ENCODE measurements at regions of chr15 and their contacts with region 1.

Region 1: DNA sequence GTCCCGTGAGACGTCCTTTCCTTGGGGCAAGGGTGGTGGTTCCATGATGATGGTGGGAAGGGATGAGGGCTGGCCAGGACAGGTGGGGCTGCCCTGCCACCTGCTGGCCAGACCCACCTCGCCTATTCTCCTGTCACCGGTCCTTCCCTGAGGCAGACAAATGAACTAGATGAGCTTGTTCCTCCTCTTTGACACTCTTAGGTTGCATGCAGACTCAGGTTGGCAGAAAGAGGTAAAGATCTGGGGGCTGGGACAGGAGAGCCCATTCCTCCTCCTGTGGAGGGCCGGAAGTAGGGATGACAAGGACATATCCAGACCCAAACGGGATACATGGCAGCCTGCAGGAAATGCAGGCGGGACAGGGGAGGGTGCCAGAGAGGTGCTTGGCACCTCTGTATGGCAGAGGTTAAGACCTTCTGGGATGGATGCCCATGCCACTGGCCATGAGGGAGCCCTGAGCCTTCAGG is 38.6 kb downstream of the ACSBG1 start:
- DNase-seq: peak; percentile 63
- H3K4me3 Mint-ChIP-seq: no peak overlapping the region
- H3K27ac Mint-ChIP-seq: no peak overlapping the region
- H3K4me1 Mint-ChIP-seq: no peaks in the 10 kb centered on the region
- H3K27me3 Mint-ChIP-seq: no peaks in the 10 kb centered on the region

Region 2: GRCh38 chr15:77944002-77944867 is 251.5 kb before region 1 on chr15:
- CTCF ChIA-PET with region 1: no interaction called
- intact Hi-C with region 1: no loop called
- DNase-seq: peak; percentile 82
- H3K4me3 Mint-ChIP-seq: peak overlapping the region; percentile 69
- H3K27ac Mint-ChIP-seq: peak overlapping the region; percentile 59
- H3K4me1 Mint-ChIP-seq: peaks cover 9% of the 10 kb centered on the region
- H3K27me3 Mint-ChIP-seq: no peaks in the 10 kb centered on the region

Region 3: DNA sequence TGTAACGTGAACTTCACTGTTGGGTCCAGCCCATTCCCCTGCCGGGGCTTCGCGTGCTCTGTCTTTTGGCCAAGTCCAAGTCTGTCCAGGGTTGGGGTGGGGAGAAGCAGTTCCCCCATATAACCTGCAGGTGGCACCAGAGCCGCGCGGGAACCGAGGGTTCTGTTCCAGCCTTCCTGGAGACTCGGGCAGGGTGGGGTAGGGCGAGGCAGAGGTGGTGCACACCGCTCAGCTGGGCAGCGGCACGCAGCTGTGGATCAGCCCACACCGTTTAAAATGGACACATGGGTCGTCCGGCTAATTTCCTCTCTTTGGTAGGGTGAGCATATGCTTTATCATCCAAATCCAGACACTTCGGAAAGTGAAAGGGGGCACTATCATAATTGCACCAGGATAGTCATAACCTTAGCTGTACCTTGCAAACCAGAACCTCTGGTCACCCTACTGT is 236.3 kb before region 1 on chr15:
- CTCF ChIA-PET with region 1: interaction called, 15 read pairs
- intact Hi-C with region 1: loop called (anchors 1 kb)
- DNase-seq: peak; percentile 85
- H3K4me3 Mint-ChIP-seq: peak overlapping the region; percentile 17
- H3K27ac Mint-ChIP-seq: no peak overlapping the region
- H3K4me1 Mint-ChIP-seq: peaks cover under 1% of the 10 kb centered on the region
- H3K27me3 Mint-ChIP-seq: peaks cover 3% of the 10 kb centered on the region

Region 4: GRCh38 chr15:78120523-78120922 is 75.2 kb before region 1 on chr15:
- CTCF ChIA-PET with region 1: interaction called, 80 read pairs
- intact Hi-C with region 1: no loop called
- DNase-seq: no peak
- H3K4me3 Mint-ChIP-seq: no peak overlapping the region
- H3K27ac Mint-ChIP-seq: no peak overlapping the region
- H3K4me1 Mint-ChIP-seq: no peaks in the 10 kb centered on the region
- H3K27me3 Mint-ChIP-seq: no peaks in the 10 kb centered on the region

Region 5: DNA sequence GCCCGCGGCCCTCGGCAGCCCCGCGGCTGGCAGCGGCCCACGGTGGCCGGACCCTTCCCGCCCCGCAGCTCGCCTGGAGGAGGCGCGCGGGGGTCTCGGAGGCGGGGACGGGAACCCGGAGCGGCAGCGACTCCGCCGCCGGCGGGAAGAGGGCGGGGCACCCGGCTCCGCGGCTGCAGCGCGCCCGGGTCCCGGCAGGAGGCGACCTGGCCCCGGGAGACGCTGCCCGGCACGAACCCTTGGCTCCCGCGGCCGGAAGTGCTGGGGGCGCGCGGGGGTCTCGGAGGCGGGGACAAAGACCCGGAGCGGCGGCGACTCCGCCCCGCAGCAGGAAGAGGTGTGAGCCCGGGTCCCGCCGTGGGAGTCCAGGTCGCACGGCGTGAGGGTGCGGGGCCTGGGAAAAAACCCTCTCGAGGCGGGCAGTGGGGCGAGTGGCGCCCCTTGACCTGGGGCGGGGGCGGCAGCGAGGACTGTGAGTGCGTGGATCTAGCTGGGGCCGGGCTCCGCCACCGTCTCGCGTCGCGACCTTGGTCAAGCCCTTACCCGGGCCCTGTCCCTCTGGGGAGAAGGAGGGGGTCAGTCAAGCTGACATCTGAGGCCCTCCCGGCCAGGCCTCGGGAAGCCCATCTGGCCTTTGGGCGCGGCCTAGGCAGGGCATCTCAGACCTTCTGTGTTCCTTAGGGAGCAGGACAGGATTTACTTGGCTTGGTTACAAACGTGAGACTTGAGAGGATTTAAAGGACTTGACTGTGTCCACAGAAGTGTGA is 64.3 kb before region 1 on chr15 and contains the start of gene CIB2:
- CTCF ChIA-PET with region 1: interaction called, 59 read pairs
- intact Hi-C with region 1: loop called (anchors 1 kb)
- DNase-seq: peak; percentile 73
- H3K4me3 Mint-ChIP-seq: peak within 1 kb of the TSS; percentile 81
- H3K27ac Mint-ChIP-seq: peak within 1 kb of the TSS; percentile 47
- H3K4me1 Mint-ChIP-seq: peaks cover 17% of the 10 kb centered on the region
- H3K27me3 Mint-ChIP-seq: no peaks in the 10 kb centered on the region
- total RNA-seq, gene CIB2: 1.9 to 2.1 TPM

Region 6: DNA sequence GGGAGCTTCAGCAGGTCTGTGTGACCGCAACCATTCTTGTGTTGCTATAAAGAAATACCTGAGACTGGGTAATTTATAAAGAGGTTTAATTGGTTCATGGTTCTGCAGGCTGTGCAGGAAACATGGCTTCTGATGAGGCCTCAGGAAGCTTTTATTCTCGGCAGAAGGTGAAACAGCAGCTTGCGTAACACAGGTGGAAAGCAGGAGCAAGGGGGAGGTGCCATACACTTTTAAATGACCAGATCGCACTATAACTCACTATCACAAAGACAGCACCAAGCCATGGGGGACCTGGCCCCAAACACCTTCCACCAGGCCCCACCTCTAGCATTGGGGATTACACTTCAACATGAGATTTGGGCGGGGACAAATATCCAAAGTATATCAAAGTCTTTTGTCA is 56.2 kb before region 1 on chr15:
- CTCF ChIA-PET with region 1: interaction called, 13 read pairs
- intact Hi-C with region 1: no loop called
- DNase-seq: no peak
- H3K4me3 Mint-ChIP-seq: no peak overlapping the region
- H3K27ac Mint-ChIP-seq: no peak overlapping the region
- H3K4me1 Mint-ChIP-seq: no peaks in the 10 kb centered on the region
- H3K27me3 Mint-ChIP-seq: no peaks in the 10 kb centered on the region

Region 7: GRCh38 chr15:78170848-78171773 is 24.7 kb before region 1 on chr15:
- CTCF ChIA-PET with region 1: interaction called, 12 read pairs
- intact Hi-C with region 1: no loop called
- DNase-seq: no peak
- H3K4me3 Mint-ChIP-seq: no peak overlapping the region
- H3K27ac Mint-ChIP-seq: no peak overlapping the region
- H3K4me1 Mint-ChIP-seq: peaks cover 38% of the 10 kb centered on the region
- H3K27me3 Mint-ChIP-seq: no peaks in the 10 kb centered on the region

Region 8: GRCh38 chr15:78182821-78183220 is 12.9 kb before region 1 on chr15:
- CTCF ChIA-PET with region 1: interaction called, 14 read pairs
- intact Hi-C with region 1: no loop called
- DNase-seq: no peak
- H3K4me3 Mint-ChIP-seq: no peak overlapping the region
- H3K27ac Mint-ChIP-seq: no peak overlapping the region
- H3K4me1 Mint-ChIP-seq: no peaks in the 10 kb centered on the region
- H3K27me3 Mint-ChIP-seq: peaks cover 2% of the 10 kb centered on the region

Measured in activated naive CD4-positive, alpha-beta T cell treated with anti-CD3 and anti-CD28 coated beads for 36 hours (primary cell).